ENCODE measurements at regions of chr5 and their contacts with region 1.

Region 1: DNA sequence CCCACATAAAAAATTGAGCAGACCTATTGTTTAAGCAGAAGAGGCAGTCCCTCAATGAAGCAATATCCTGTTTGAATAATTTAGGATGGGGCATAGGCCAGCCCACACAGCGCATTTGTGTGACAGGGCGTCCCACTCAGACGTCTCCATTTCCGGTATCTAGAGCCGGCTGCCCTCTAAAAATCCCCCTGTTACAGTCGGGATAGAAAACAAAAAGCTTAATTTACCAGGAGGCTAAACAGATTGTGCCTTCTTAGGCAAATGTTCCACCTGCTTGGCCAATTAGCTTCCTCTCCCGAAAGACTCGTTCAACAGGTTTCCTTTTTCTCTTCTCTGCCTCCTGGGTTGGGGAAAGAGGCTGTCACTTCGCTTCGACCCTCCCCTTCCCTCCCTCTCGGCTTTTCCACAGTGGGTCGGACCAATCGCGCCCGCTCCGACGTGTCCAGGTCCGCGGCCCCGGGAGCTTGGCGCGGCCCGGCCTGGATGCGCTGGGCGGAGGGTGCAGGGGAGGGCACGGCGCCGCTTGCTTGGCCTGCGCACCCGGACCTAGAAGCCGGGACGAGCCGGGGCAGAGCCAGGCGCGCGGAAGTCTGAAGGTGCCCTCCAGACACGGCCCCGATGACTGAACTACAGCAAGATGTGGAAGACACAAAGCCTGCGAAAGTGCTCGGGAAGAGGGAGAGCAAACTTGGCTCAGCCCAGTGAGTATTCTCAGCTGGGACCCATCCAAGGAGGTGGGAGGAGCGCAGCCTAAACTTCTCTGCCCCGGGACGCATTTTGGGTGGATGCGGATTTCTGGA is at the start of gene GRAMD2B:
- DNase-seq: peak; percentile 88 to 90
- H3K4me3 ChIP-seq: peak within 1 kb of the TSS; percentile 67
- H3K27ac ChIP-seq: peak within 1 kb of the TSS; percentile 60
- H3K4me1 ChIP-seq: peaks cover 26% of the 10 kb centered on the region
- H3K27me3 ChIP-seq: no peaks in the 10 kb centered on the region
- CTCF ChIP-seq: no peak
- total RNA-seq, gene GRAMD2B: 10.0 and 11.7 TPM in 2 replicates

Region 2: DNA sequence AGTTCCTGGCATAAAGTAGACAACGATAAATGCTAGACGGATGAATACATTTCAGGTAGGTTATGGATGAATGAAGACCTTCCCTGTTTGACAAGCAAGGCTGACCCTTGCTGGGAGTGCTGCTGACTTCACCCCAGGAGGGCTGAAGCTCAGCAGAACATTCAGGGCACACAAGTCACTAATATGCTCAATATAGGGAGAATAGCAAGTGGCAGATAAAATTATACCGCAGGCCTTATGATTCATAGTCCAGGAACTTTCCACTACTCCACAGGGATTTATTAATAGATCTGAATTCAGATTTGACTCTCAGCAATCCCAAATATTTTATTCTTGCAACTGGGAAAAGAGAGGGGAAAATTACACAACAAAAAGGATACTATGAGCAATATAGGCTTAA is 38.2 kb before region 1 on chr5:
- CTCF ChIA-PET with region 1: no interaction called
- POLR2A ChIA-PET with region 1: no interaction called
- intact Hi-C with region 1: loop called (anchors 1 kb)
- DNase-seq: peak; percentile 52 to 93
- H3K4me3 ChIP-seq: peak overlapping the region; percentile 32; the same call in 1 of the 2 replicates
- H3K27ac ChIP-seq: peak overlapping the region; percentile 89
- H3K4me1 ChIP-seq: peaks cover 53% of the 10 kb centered on the region
- H3K27me3 ChIP-seq: no peaks in the 10 kb centered on the region
- CTCF ChIP-seq: no peak

Region 3: GRCh38 chr5:126391386-126391785 is 31.8 kb before region 1 on chr5:
- CTCF ChIA-PET with region 1: no interaction called
- POLR2A ChIA-PET with region 1: interaction called, 25 read pairs
- intact Hi-C with region 1: no loop called
- DNase-seq: no peak
- H3K4me3 ChIP-seq: no peak overlapping the region
- H3K27ac ChIP-seq: no peak overlapping the region
- H3K4me1 ChIP-seq: peaks cover 12% of the 10 kb centered on the region
- H3K27me3 ChIP-seq: no peaks in the 10 kb centered on the region
- CTCF ChIP-seq: no peak

Region 4: DNA sequence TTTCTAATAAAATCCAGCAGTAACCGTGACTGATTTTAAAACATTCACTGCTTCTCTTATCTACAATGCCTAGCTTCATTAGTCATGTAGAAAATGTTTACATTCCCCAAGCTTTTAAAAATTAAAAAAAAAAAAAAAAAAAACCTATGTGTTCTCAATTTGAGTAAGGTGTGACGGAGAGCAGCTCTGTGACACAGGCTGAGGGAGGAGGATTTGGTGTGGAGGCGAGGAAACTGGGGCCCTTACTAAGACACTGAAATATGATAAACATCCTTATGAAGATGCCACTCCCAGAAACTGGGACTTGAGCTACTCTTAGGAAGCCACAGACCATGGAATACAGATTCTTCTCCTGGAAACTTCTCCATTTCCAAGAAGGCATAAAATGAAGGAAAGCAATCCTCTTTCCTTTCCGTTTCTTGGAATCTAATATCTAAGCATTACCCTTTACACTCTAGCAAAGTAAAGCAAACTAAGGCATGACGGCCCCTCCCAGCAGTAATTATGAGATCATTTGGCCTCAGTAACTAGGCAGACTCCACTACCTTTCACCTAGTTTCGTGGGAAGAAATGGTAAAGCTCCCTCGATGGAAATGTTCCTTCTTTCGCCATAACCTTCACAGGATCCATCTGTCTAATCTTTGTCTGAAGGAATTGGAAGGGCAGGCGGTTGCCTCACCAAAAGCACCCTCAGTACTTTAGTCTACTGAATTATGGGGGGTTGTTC is 23.5 kb after region 1 on chr5:
- CTCF ChIA-PET with region 1: interaction called, 6 read pairs
- POLR2A ChIA-PET with region 1: interaction called, 7 read pairs
- intact Hi-C with region 1: loop called (anchors 2 kb)
- DNase-seq: peak; percentile 63 to 77
- H3K4me3 ChIP-seq: no peak overlapping the region
- H3K27ac ChIP-seq: peak overlapping the region; percentile 83
- H3K4me1 ChIP-seq: peaks cover 17% of the 10 kb centered on the region
- H3K27me3 ChIP-seq: no peaks in the 10 kb centered on the region
- CTCF ChIP-seq: no peak

Region 5: GRCh38 chr5:126471875-126472537 is 48.8 kb after region 1 on chr5:
- CTCF ChIA-PET with region 1: no interaction called
- POLR2A ChIA-PET with region 1: interaction called, 3 read pairs
- intact Hi-C with region 1: loop called (anchors 5 kb)
- DNase-seq: peak in 1 of 2 experiments; percentile 66
- H3K4me3 ChIP-seq: no peak overlapping the region
- H3K27ac ChIP-seq: peak overlapping the region; percentile 63
- H3K4me1 ChIP-seq: peaks cover 19% of the 10 kb centered on the region
- H3K27me3 ChIP-seq: no peaks in the 10 kb centered on the region
- CTCF ChIP-seq: no peak

Region 6: DNA sequence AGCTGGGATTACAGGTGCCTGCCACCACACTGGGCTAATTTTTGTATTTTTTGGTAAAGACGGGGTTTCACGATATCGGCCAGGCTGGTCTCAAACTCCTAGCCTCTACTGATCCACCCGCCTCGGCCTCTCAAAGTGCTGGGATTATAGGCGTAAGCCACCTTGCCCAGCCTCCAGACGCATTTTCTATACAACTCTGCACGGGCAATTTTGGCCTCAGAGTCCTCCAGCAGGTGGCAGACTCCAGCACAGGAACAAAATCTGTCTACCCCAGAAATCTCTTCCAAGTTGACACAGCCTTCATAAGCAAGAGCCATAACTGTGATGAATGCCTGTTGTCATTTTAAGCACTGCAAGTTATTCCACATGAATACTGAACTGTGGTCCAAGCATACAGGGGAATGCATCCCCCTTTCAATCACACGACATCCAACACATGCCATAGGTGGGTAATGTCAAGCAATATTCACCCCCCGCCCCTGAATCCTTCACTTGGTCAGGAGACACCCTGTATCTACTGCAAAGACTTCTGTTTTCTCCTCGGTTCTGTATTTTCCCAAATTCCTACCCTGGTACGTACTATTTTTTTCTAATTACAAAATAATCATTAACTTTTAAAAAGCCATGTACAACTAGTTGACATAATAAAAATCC is 121.0 kb after region 1 on chr5:
- CTCF ChIA-PET with region 1: no interaction called
- POLR2A ChIA-PET with region 1: no interaction called
- intact Hi-C with region 1: loop called (anchors 1 kb)
- DNase-seq: no peak
- H3K4me3 ChIP-seq: no peak overlapping the region
- H3K27ac ChIP-seq: no peak overlapping the region
- H3K4me1 ChIP-seq: no peaks in the 10 kb centered on the region
- H3K27me3 ChIP-seq: no peaks in the 10 kb centered on the region
- CTCF ChIP-seq: peak; percentile 54

Region 7: DNA sequence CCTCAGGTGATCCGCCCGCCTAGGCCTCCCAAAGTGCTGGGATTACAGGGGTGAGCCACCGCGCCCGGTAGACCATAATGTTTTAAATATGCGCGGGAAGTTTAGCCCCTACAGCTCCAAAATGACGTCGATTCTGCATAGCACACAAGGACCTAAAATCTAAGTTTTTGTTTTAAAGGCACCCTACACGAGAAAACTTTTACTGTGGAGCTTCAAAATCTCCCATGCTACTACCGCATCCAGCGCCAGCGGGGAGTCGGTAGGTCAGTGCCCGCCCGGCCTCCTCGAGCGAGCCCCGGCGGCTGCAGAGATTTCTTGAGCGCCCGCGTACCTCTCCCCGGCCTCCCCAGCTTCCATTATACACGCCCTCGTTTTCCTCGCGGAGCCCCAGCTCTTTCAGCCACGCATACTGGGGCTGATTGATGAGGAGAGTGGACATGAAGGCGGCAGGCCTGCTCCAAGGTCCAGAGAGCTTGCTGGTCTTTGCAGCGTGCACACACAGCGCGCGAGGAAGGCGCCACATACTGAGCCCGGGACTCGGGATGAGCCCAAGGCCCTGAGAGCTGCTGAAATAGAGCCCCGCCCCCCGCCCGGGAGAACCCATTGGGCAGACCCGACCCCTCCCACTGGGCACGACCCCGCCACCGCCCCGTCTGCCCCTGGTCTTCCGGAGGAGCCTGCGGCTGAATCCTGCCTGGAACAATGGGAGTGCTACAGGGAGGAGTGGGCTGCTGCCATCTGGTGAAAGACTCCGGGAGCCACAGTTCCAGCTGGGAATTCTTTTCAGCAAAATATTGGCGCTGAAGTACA is 171.7 kb after region 1 on chr5 and contains the start of gene ALDH7A1:
- CTCF ChIA-PET with region 1: no interaction called
- POLR2A ChIA-PET with region 1: no interaction called
- intact Hi-C with region 1: loop called (anchors 1 kb)
- DNase-seq: peak; percentile 84 to 91
- H3K4me3 ChIP-seq: peak within 1 kb of the TSS; percentile 68
- H3K27ac ChIP-seq: peak within 1 kb of the TSS; percentile 45
- H3K4me1 ChIP-seq: peaks cover 20% of the 10 kb centered on the region
- H3K27me3 ChIP-seq: no peaks in the 10 kb centered on the region
- CTCF ChIP-seq: peak; percentile 54
- total RNA-seq, gene ALDH7A1: 109 and 111 TPM in 2 replicates

Region 8: GRCh38 chr5:127053049-127053448 is 629.9 kb after region 1 on chr5:
- CTCF ChIA-PET with region 1: no interaction called
- POLR2A ChIA-PET with region 1: no interaction called
- intact Hi-C with region 1: no loop called
- DNase-seq: no peak
- H3K4me3 ChIP-seq: no peak overlapping the region
- H3K27ac ChIP-seq: no peak overlapping the region
- H3K4me1 ChIP-seq: peaks cover 17% of the 10 kb centered on the region
- H3K27me3 ChIP-seq: no peaks in the 10 kb centered on the region
- CTCF ChIP-seq: no peak

Region 9: DNA sequence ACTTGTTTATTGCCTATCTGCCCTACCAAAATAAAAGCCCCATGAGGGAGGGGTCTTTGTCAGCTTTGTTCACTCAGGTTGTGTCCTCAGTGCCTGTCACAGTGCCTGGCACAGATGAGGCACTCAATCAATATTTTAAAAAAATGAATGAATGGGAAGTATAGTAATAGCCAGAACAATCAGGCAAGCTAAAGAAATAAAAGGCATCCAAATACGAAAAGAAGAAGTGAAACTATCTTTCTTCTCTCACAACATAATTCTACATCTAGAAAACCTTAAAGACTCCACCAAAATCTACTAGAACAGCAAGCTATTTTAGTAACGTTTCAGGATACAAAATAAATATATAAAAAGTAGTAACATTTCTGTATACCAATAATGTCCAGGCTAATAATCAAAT is 687.9 kb after region 1 on chr5:
- CTCF ChIA-PET with region 1: no interaction called
- POLR2A ChIA-PET with region 1: no interaction called
- intact Hi-C with region 1: no loop called
- DNase-seq: no peak
- H3K4me3 ChIP-seq: no peak overlapping the region
- H3K27ac ChIP-seq: no peak overlapping the region
- H3K4me1 ChIP-seq: no peaks in the 10 kb centered on the region
- H3K27me3 ChIP-seq: no peaks in the 10 kb centered on the region
- CTCF ChIP-seq: no peak

Measured in PC-9 (cell line).